GM12878 (cell line): ENCODE measurements at regions of chr10 and their contacts with region 1.

Region 1: DNA sequence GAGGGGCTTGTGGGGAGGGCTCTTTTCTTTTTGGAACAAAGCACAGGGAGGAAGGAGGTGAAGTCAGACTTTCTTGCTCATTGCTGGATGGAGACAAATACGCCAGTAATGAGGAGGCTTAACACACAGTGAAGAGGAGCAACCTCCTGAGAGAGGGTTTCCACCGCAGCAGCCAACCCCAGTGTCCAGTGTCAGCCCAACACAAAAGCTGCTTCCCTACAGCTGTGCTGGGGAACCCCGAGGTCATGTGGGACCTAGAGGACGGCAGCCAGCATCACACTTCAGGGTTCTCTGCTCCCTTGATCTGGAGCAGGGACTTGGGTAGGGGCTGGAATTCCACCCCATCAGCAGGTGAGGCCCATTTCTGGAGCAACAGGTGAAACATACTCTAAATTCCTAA is 7.7 kb downstream of the BLNK start:
- DNase-seq: no peak
- ATAC-seq: peak; percentile 68
- H3K4me3 ChIP-seq: peak overlapping the region; percentile 40
- H3K27ac ChIP-seq: peak overlapping the region; percentile 60
- H3K4me1 ChIP-seq: peaks cover 37% of the 10 kb centered on the region
- H3K27me3 ChIP-seq: no peaks in the 10 kb centered on the region
- CTCF ChIP-seq: no peak
- EP300 ChIP-seq: no peak
- POLR2A ChIP-seq: no peak; the same call in 1 of the 2 replicates
- RAD21 ChIP-seq: no peak

Region 2: GRCh38 chr10:96089670-96090462 is 173.8 kb before region 1 on chr10:
- CTCF ChIA-PET with region 1: no interaction called
- POLR2A ChIA-PET with region 1: no interaction called
- RAD21 ChIA-PET with region 1: no interaction called
- SMC1A ChIA-PET with region 1: no interaction called
- in situ Hi-C with region 1: no loop called
- intact Hi-C with region 1: no loop called
- DNase-seq: peak; percentile 84
- ATAC-seq: peak; percentile 96
- H3K4me3 ChIP-seq: peak overlapping the region; percentile 79
- H3K27ac ChIP-seq: peak overlapping the region; percentile 95
- H3K4me1 ChIP-seq: 0 out of 2 replicates have a peak, but pooled peaks cover 3% of the 10 kb centered on the region
- H3K27me3 ChIP-seq: no peaks in the 10 kb centered on the region
- CTCF ChIP-seq: no peak
- EP300 ChIP-seq: peak in 1 of 2 experiments; percentile 54; a peak in 1 of 4 replicates
- POLR2A ChIP-seq: peak; percentile 97
- RAD21 ChIP-seq: no peak

Region 3: GRCh38 chr10:96236090-96236478 is 27.6 kb before region 1 on chr10:
- CTCF ChIA-PET with region 1: interaction called, 219 read pairs
- POLR2A ChIA-PET with region 1: interaction called, 21 read pairs
- RAD21 ChIA-PET with region 1: interaction called, 159 read pairs
- SMC1A ChIA-PET with region 1: interaction called, 123 read pairs
- in situ Hi-C with region 1: no loop called
- intact Hi-C with region 1: loop called (anchors 2 kb)
- DNase-seq: no peak
- ATAC-seq: peak; percentile 66
- H3K4me3 ChIP-seq: no peak overlapping the region; the same call in 1 of the 2 replicates
- H3K27ac ChIP-seq: peak overlapping the region; percentile 45; the same call in 1 of the 2 replicates
- H3K4me1 ChIP-seq: peaks cover 37% of the 10 kb centered on the region
- H3K27me3 ChIP-seq: no peaks in the 10 kb centered on the region
- CTCF ChIP-seq: no peak
- EP300 ChIP-seq: no peak
- POLR2A ChIP-seq: no peak
- RAD21 ChIP-seq: no peak

Region 4: GRCh38 chr10:96244354-96244753 is 19.3 kb before region 1 on chr10:
- CTCF ChIA-PET with region 1: interaction called, 219 read pairs
- POLR2A ChIA-PET with region 1: interaction called, 22 read pairs
- RAD21 ChIA-PET with region 1: interaction called, 69 read pairs
- SMC1A ChIA-PET with region 1: interaction called, 137 read pairs
- in situ Hi-C with region 1: no loop called
- intact Hi-C with region 1: no loop called
- DNase-seq: peak; percentile 89
- ATAC-seq: peak; percentile 98
- H3K4me3 ChIP-seq: 0 out of 2 replicates have a peak overlapping the region, but pooled peaks have one; percentile 18
- H3K27ac ChIP-seq: peak overlapping the region; percentile 67
- H3K4me1 ChIP-seq: peaks cover 24% of the 10 kb centered on the region
- H3K27me3 ChIP-seq: no peaks in the 10 kb centered on the region
- CTCF ChIP-seq: no peak
- EP300 ChIP-seq: peak; percentile 41 to 56; a peak in 3 of 4 replicates
- POLR2A ChIP-seq: peak; percentile 46
- RAD21 ChIP-seq: peak; percentile 3; the same call in 1 of the 2 replicates

Region 5: DNA sequence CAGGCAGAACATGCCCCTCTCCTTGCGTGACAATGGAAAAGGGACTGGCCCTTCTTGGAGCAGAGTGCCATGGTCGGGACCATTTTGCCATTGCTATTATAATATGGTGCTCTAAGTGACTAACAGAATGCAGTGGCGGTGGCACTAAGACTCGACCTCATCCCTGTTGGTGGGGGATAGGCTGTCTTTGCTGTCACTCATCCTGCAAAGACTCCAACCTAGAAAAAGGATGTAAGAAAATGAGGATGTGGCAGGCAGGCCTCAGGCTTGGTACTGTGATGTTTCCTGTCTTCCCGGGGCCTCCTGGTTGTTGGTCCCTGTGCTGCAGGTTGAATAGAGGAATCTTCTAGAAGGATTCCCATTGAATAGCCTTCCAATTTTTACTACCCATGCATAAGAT is 10.9 kb before region 1 on chr10:
- CTCF ChIA-PET with region 1: interaction called, 8 read pairs
- POLR2A ChIA-PET with region 1: interaction called, 22 read pairs
- RAD21 ChIA-PET with region 1: interaction called, 22 read pairs
- SMC1A ChIA-PET with region 1: interaction called, 137 read pairs
- in situ Hi-C with region 1: no loop called
- intact Hi-C with region 1: loop called (anchors 2 kb)
- DNase-seq: no peak
- ATAC-seq: no peak; the same call in 2 of the 3 replicates
- H3K4me3 ChIP-seq: no peak overlapping the region
- H3K27ac ChIP-seq: no peak overlapping the region
- H3K4me1 ChIP-seq: peaks cover 7% of the 10 kb centered on the region
- H3K27me3 ChIP-seq: no peaks in the 10 kb centered on the region
- CTCF ChIP-seq: no peak
- EP300 ChIP-seq: no peak
- POLR2A ChIP-seq: no peak
- RAD21 ChIP-seq: no peak

Region 6: DNA sequence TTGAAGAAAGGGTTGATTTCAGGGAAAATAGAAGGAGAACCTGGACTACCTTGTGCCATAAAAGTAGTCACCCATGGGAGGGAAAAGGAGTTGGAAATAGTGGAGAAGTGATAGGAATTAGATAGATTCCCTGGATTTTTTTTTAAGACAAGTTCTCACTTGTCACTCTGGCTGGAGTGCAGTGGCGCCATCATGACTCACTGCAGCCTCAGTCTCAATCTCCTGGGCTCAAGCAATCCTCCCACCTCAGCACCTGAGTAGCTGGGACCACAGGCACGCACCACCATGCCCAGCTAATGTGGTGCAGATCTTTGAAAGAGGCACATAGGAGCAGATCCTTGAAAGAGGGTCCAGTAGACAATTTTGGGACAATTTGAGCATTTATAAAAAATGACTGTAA is 17.2 kb after region 1 on chr10:
- CTCF ChIA-PET with region 1: interaction called, 10 read pairs
- POLR2A ChIA-PET with region 1: interaction called, 174 read pairs
- RAD21 ChIA-PET with region 1: interaction called, 256 read pairs
- SMC1A ChIA-PET with region 1: interaction called, 305 read pairs
- in situ Hi-C with region 1: no loop called
- intact Hi-C with region 1: no loop called
- DNase-seq: no peak
- ATAC-seq: no peak
- H3K4me3 ChIP-seq: no peak overlapping the region
- H3K27ac ChIP-seq: no peak overlapping the region
- H3K4me1 ChIP-seq: peaks cover 12% of the 10 kb centered on the region
- H3K27me3 ChIP-seq: no peaks in the 10 kb centered on the region
- CTCF ChIP-seq: no peak
- EP300 ChIP-seq: no peak
- POLR2A ChIP-seq: no peak
- RAD21 ChIP-seq: no peak

Region 7: GRCh38 chr10:96287392-96288105 is 23.9 kb after region 1 on chr10:
- CTCF ChIA-PET with region 1: interaction called, 213 read pairs
- POLR2A ChIA-PET with region 1: interaction called, 174 read pairs
- RAD21 ChIA-PET with region 1: interaction called, 362 read pairs
- SMC1A ChIA-PET with region 1: interaction called, 305 read pairs
- in situ Hi-C with region 1: no loop called
- intact Hi-C with region 1: no loop called
- DNase-seq: peak; percentile 93
- ATAC-seq: peak; percentile 81
- H3K4me3 ChIP-seq: peak overlapping the region; percentile 70
- H3K27ac ChIP-seq: peak overlapping the region; percentile 92
- H3K4me1 ChIP-seq: peaks cover 50% of the 10 kb centered on the region
- H3K27me3 ChIP-seq: no peaks in the 10 kb centered on the region
- CTCF ChIP-seq: no peak
- EP300 ChIP-seq: peak; percentile 78 to 96; a peak in 3 of 4 replicates
- POLR2A ChIP-seq: no peak; the same call in 1 of the 2 replicates
- RAD21 ChIP-seq: 0 out of 2 replicates have a peak, but pooled peaks have one; percentile 29

Region 8: GRCh38 chr10:96339957-96340904 is 76.6 kb after region 1 on chr10:
- CTCF ChIA-PET with region 1: no interaction called
- POLR2A ChIA-PET with region 1: no interaction called
- RAD21 ChIA-PET with region 1: no interaction called
- SMC1A ChIA-PET with region 1: no interaction called
- in situ Hi-C with region 1: no loop called
- intact Hi-C with region 1: no loop called
- DNase-seq: no peak
- ATAC-seq: peak; percentile 95
- H3K4me3 ChIP-seq: no peak overlapping the region
- H3K27ac ChIP-seq: no peak overlapping the region
- H3K4me1 ChIP-seq: no peaks in the 10 kb centered on the region
- H3K27me3 ChIP-seq: no peaks in the 10 kb centered on the region
- CTCF ChIP-seq: peak; percentile 68 to 85 (median 82)
- EP300 ChIP-seq: no peak
- POLR2A ChIP-seq: no peak
- RAD21 ChIP-seq: peak; percentile 89

Region 9: GRCh38 chr10:96411716-96412320 is 148.1 kb after region 1 on chr10:
- CTCF ChIA-PET with region 1: no interaction called
- POLR2A ChIA-PET with region 1: no interaction called
- RAD21 ChIA-PET with region 1: no interaction called
- SMC1A ChIA-PET with region 1: no interaction called
- in situ Hi-C with region 1: no loop called
- intact Hi-C with region 1: no loop called
- DNase-seq: no peak
- ATAC-seq: no peak
- H3K4me3 ChIP-seq: no peak overlapping the region
- H3K27ac ChIP-seq: no peak overlapping the region
- H3K4me1 ChIP-seq: no peaks in the 10 kb centered on the region; the same call in 1 of the 2 replicates
- H3K27me3 ChIP-seq: no peaks in the 10 kb centered on the region; a peak in 1 of 4 replicates
- CTCF ChIP-seq: no peak
- EP300 ChIP-seq: no peak
- POLR2A ChIP-seq: no peak
- RAD21 ChIP-seq: no peak

Region 10: GRCh38 chr10:96556003-96556402 is 292.3 kb after region 1 on chr10:
- CTCF ChIA-PET with region 1: no interaction called
- POLR2A ChIA-PET with region 1: no interaction called
- RAD21 ChIA-PET with region 1: no interaction called
- SMC1A ChIA-PET with region 1: no interaction called
- in situ Hi-C with region 1: no loop called
- intact Hi-C with region 1: no loop called
- DNase-seq: no peak
- ATAC-seq: peak; percentile 44; the same call in 2 of the 3 replicates
- H3K4me3 ChIP-seq: no peak overlapping the region
- H3K27ac ChIP-seq: no peak overlapping the region
- H3K4me1 ChIP-seq: no peaks in the 10 kb centered on the region
- H3K27me3 ChIP-seq: no peaks in the 10 kb centered on the region
- CTCF ChIP-seq: peak; percentile 25 to 39 (median 38); a peak in 4 of 6 replicates
- EP300 ChIP-seq: no peak
- POLR2A ChIP-seq: no peak
- RAD21 ChIP-seq: peak; percentile 41; the same call in 1 of the 2 replicates